ENCODE measurements at regions of chr1 and their contacts with region 1.

Region 1: DNA sequence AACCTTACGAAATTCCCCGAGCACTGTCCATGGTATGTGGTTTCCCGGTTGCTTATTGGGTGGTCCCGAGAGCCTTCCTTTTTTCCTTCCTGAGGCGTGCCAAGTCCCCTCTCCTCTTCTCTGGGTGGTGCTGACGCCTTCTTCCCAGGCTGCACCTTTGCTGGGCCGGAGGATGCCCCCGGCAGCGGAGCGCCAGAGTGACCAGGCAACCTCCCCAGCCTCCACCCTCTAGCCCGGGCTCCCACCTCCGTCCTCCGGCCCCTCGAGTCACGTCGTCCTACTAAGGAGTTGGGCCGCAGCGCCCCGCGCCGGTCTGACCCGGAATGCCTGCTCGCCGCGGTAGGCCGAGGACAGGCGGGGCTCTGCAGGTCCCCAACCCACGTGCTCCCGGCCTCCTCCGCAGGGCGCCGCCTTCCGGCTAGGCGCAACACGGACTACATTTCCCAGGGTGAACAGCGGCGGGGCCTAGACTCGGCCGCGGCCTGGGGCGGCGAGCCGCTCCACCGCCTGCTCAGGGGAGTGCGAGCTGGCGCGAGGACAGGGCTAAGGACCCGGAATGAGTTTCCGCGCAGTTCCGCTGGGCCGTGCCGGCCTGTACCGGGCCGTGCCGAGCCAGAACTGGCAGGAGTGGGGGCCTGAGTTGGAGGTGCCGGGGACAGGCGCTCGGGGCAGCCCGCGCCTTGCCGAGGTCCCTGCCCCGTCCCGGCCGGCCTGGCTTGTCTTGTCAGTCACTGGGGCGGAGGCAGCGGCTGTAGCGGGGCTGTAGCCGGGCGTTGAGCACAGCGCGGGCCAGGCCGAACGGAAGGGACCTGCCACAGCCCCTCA is at the start of gene IPO13:
- DNase-seq: peak; percentile 92 to 99 (median 96)
- ATAC-seq: peak; percentile 98
- H3K4me3 ChIP-seq: peak within 1 kb of the TSS; percentile 86
- H3K4me3 Mint-ChIP-seq: peak within 1 kb of the TSS; percentile 87 to 96 (median 90)
- H3K27ac ChIP-seq: peak within 1 kb of the TSS; percentile 97
- H3K27ac Mint-ChIP-seq: peak within 1 kb of the TSS; percentile 84 to 98 (median 94)
- H3K4me1 ChIP-seq: peaks cover 17% of the 10 kb centered on the region in 2 donors
- H3K4me1 Mint-ChIP-seq: peaks cover 37 to 68% (median 56%) of the 10 kb centered on the region in 7 donors
- H3K27me3 ChIP-seq: no peaks in the 10 kb centered on the region
- H3K27me3 Mint-ChIP-seq: no peaks in the 10 kb centered on the region
- total RNA-seq, gene IPO13: 10.1 to 32.3 (median 17.0) TPM

Region 2: DNA sequence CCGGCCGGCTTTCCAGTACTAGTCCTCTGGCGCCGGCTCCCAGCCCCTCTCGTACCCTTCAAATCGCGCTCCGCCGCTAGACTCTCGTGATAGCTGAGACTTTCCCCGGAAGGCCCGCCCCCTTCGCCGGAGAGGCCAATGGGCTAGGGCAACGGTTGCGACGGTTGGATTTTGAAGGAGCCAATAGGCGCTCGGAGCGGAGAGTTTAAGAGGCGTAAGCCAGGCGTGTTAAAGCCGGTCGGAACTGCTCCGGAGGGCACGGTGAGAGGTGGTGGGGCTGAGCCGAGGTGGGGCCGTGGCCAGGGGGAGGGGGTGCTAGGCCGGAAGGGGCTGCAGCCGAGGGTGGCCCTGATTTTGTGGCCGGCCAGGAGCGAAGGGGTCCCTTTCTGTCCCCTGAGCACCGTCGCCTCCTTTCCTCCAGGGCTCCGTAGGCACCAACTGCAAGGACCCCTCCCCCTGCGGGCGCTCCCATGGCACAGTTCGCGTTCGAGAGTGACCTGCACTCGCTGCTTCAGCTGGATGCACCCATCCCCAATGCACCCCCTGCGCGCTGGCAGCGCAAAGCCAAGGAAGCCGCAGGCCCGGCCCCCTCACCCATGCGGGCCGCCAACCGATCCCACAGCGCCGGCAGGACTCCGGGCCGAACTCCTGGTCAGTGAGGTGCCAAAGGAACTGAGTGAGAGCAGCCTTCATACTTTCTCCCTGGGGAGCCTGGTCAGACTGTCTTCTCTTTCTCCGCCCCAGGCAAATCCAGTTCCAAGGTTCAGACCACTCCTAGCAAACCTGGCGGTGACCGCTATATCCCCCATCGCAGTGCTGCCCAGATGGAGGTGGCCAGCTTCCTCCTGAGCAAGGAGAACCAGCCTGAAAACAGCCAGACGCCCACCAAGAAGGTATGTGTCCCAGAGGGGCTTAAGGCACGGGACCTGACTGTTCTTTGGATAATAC is 587.4 kb before region 1 on chr1 and contains the start of gene CDC20:
- CTCF ChIA-PET with region 1: no interaction called
- POLR2A ChIA-PET with region 1: no interaction called
- intact Hi-C with region 1: loop called in 1 of 2 experiments (anchors 1 kb)
- DNase-seq: peak; percentile 91 to 99 (median 96)
- ATAC-seq: peak; percentile 100
- H3K4me3 ChIP-seq: peak within 1 kb of the TSS; percentile 90
- H3K4me3 Mint-ChIP-seq: peak within 1 kb of the TSS; percentile 74 to 97 (median 90)
- H3K27ac ChIP-seq: peak within 1 kb of the TSS; percentile 78
- H3K27ac Mint-ChIP-seq: peak within 1 kb of the TSS; percentile 22 to 88 (median 87)
- H3K4me1 ChIP-seq: peaks cover 5 to 10% of the 10 kb centered on the region in 2 donors
- H3K4me1 Mint-ChIP-seq: peaks cover 10 to 55% (median 20%) of the 10 kb centered on the region in 7 donors
- H3K27me3 ChIP-seq: no peaks in the 10 kb centered on the region
- H3K27me3 Mint-ChIP-seq: no peaks in the 10 kb centered on the region
- total RNA-seq, gene CDC20: 0.38 to 101 (median 0.78) TPM

Region 3: DNA sequence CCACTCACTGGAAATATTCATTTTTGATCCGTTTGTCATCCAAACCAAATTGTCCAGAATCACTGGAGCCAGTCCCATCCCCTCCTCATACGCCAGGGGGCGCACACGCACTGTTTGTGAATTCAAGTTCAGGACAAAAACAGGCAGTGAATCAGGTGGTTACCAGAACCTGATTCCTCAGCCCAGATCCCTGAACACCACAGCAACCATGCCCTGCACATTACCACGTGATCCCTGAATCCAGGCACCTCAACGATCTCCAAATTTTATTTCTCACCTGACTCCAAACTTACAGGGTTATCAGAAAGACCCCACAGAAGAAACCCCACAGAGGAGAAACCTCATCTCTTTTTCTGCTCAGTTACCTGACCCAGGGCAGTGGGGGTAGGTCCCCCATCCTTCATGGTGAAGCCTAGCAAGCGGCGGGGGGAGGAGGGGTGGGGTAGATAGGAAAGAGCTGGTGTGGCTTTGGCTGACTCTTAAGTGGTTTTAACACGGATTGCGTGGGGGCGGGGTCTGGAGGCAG is 417.2 kb before region 1 on chr1:
- CTCF ChIA-PET with region 1: no interaction called
- POLR2A ChIA-PET with region 1: no interaction called
- intact Hi-C with region 1: loop called (anchors 5 kb)
- DNase-seq: peak; percentile 53 to 82 (median 75)
- ATAC-seq: peak; percentile 76
- H3K4me3 ChIP-seq: no peak overlapping the region
- H3K4me3 Mint-ChIP-seq: peak overlapping the region; percentile 16 to 97 (median 54)
- H3K27ac ChIP-seq: no peak overlapping the region
- H3K27ac Mint-ChIP-seq: peak overlapping the region in 1 of 9 donors; percentile 69
- H3K4me1 ChIP-seq: peaks cover 0 to 3% of the 10 kb centered on the region in 2 donors
- H3K4me1 Mint-ChIP-seq: peaks cover 16 to 27% (median 22%) of the 10 kb centered on the region in 7 donors
- H3K27me3 ChIP-seq: peaks cover 8 to 9% of the 10 kb centered on the region in 2 donors
- H3K27me3 Mint-ChIP-seq: peaks cover 43 to 57% (median 49%) of the 10 kb centered on the region in 5 donors

Region 4: DNA sequence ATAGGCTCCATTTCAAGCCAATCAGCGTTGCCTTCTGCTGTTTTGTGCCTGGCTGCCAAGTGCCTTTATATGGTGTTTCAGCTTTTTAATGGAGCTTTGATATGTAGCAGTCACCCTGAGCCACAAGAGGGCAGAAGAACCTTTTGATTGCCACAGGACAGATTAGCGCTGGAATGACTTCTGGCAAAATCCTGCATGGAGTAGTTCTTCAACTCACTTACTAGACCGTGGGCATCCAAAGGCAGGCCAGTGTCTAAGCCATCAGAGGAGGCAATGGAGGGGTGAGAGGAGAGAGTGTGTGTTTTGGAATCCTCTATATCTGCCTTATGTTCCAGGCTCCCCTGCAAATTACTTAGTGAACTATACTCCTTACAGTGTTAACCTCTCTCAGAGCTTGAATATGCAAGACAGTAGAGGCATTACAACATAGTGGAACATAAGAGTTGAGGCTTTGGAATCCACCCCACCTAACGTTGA is 182.9 kb before region 1 on chr1:
- CTCF ChIA-PET with region 1: interaction called, 3 read pairs
- POLR2A ChIA-PET with region 1: no interaction called
- intact Hi-C with region 1: loop called in 1 of 2 experiments (anchors 5 kb)
- DNase-seq: peak; percentile 13 to 54 (median 45)
- ATAC-seq: peak; percentile 82
- H3K4me3 ChIP-seq: no peak overlapping the region
- H3K4me3 Mint-ChIP-seq: no peak overlapping the region
- H3K27ac ChIP-seq: no peak overlapping the region
- H3K27ac Mint-ChIP-seq: no peak overlapping the region
- H3K4me1 ChIP-seq: no peaks in the 10 kb centered on the region
- H3K4me1 Mint-ChIP-seq: peaks cover 0 to 12% (median 4%) of the 10 kb centered on the region in 7 donors
- H3K27me3 ChIP-seq: no peaks in the 10 kb centered on the region
- H3K27me3 Mint-ChIP-seq: no peaks in the 10 kb centered on the region

Region 5: GRCh38 chr1:43974443-43975248 is 28.2 kb after region 1 on chr1 and contains the start of gene ATP6V0B:
- CTCF ChIA-PET with region 1: interaction called, 4 read pairs
- POLR2A ChIA-PET with region 1: interaction called, 23 read pairs
- intact Hi-C with region 1: loop called (anchors 1 kb)
- DNase-seq: peak; percentile 83 to 98 (median 90)
- ATAC-seq: peak; percentile 85
- H3K4me3 ChIP-seq: peak within 1 kb of the TSS; percentile 93
- H3K4me3 Mint-ChIP-seq: peak within 1 kb of the TSS; percentile 88 to 98 (median 94)
- H3K27ac ChIP-seq: peak within 1 kb of the TSS; percentile 91
- H3K27ac Mint-ChIP-seq: peak within 1 kb of the TSS; percentile 90 to 99 (median 94)
- H3K4me1 ChIP-seq: peaks cover 27 to 29% of the 10 kb centered on the region in 2 donors
- H3K4me1 Mint-ChIP-seq: peaks cover 51 to 69% (median 58%) of the 10 kb centered on the region in 7 donors
- H3K27me3 ChIP-seq: no peaks in the 10 kb centered on the region
- H3K27me3 Mint-ChIP-seq: peaks cover 0 to 5% (median 0%) of the 10 kb centered on the region in 5 donors
- total RNA-seq, gene ATP6V0B: 47.3 to 152 (median 69.3) TPM

Region 6: GRCh38 chr1:44029906-44030604 is 83.6 kb after region 1 on chr1:
- CTCF ChIA-PET with region 1: no interaction called
- POLR2A ChIA-PET with region 1: no interaction called
- intact Hi-C with region 1: loop called (anchors 1 kb)
- DNase-seq: peak; percentile 73 to 90 (median 85)
- ATAC-seq: peak; percentile 90
- H3K4me3 ChIP-seq: peak overlapping the region; percentile 61
- H3K4me3 Mint-ChIP-seq: peak overlapping the region; percentile 94 to 99 (median 97)
- H3K27ac ChIP-seq: peak overlapping the region; percentile 78
- H3K27ac Mint-ChIP-seq: peak overlapping the region; percentile 92 to 98 (median 94)
- H3K4me1 ChIP-seq: peaks cover 0 to 7% of the 10 kb centered on the region in 2 donors
- H3K4me1 Mint-ChIP-seq: peaks cover 16 to 40% (median 23%) of the 10 kb centered on the region in 7 donors
- H3K27me3 ChIP-seq: no peaks in the 10 kb centered on the region
- H3K27me3 Mint-ChIP-seq: no peaks in the 10 kb centered on the region

Measured in naive thymus-derived CD4-positive, alpha-beta T cell (primary cell).